Left lung (tissue), 14 donors: ENCODE measurements at regions of chr20 and their contacts with region 1.

Region 1: GRCh38 chr20:47411161-47411560 is 54.7 kb upstream of the ZMYND8 start:
- DNase-seq: no peak
- ATAC-seq: no peak
- H3K4me3 ChIP-seq: no peak overlapping the region
- H3K27ac ChIP-seq: peak overlapping the region; percentile 48 to 57
- H3K4me1 ChIP-seq: peaks cover 0 to 27% of the 10 kb centered on the region in 2 donors
- H3K27me3 ChIP-seq: no peaks in the 10 kb centered on the region
- CTCF ChIP-seq: no peak

Region 2: DNA sequence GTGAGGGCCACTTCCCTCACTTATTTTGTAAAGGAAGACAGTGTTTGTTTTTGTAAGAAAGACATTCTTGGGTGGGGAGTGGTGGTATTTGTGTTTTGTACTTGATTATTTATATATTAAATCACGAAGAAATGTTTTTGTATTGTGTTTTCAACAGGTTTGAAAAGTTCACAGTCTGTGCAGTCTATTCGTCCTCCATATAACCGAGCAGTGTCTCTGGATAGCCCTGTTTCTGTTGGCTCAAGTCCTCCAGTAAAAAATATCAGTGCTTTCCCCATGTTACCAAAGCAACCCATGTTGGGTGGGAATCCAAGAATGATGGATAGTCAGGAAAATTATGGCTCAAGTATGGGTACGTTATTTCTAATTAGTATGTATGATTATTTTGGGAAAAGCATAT is 227.7 kb after region 1 on chr20:
- intact Hi-C with region 1: loop called in 1 of 2 experiments (anchors 10 kb)
- DNase-seq: no peak
- ATAC-seq: no peak
- H3K4me3 ChIP-seq: no peak overlapping the region
- H3K27ac ChIP-seq: no peak overlapping the region
- H3K4me1 ChIP-seq: no peaks in the 10 kb centered on the region
- H3K27me3 ChIP-seq: no peaks in the 10 kb centered on the region
- CTCF ChIP-seq: no peak